ENCODE measurements at regions of chr19 and their contacts with region 1.

Region 1: DNA sequence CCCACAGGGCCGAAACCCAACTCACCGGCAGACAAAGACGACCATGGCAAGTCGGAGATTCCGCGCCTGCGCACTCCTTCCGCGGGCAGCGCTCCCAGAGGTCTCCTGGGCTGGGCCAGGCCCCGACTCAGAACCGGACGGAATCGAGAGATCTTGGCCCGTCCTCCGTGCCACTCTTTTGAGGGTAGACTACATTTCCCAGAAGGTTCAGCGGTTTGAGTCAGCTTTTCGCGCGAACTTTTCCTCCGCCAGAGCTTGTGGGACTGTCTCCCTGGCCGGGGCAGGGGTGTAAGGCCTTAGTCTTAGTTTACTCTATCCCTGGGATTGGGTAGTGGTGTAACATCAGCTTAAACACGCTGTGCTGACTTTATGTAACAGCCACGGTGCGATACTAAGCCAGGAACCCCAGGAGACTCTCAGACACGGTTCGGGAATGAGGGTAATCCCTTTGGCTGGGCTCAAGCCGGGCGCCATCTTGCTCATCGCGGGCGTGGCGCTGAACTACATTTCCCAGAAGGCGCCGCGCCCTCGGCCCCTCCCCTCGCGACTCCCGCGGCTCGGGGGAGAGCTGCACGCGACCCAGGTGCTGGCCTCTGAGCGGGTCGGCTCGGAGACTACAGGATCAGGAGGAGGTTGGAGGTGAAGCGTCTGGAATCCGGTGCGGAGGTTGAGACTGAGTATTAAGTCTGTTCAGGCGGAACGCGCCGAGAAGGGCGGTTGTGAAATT is at the start of gene ZNF260:
- DNase-seq: peak; percentile 96
- H3K4me3 Mint-ChIP-seq: peak within 1 kb of the TSS; percentile 100
- H3K27ac Mint-ChIP-seq: peak within 1 kb of the TSS; percentile 98
- H3K4me1 Mint-ChIP-seq: peaks cover 16% of the 10 kb centered on the region
- H3K27me3 Mint-ChIP-seq: no peaks in the 10 kb centered on the region
- total RNA-seq, gene ZNF260: 3.7 to 5.4 TPM

Region 2: GRCh38 chr19:36132489-36132891 is 395.9 kb before region 1 on chr19:
- CTCF ChIA-PET with region 1: no interaction called
- intact Hi-C with region 1: loop called (anchors 2 kb)
- DNase-seq: peak; percentile 61
- H3K4me3 Mint-ChIP-seq: no peak overlapping the region
- H3K27ac Mint-ChIP-seq: peak overlapping the region; percentile 18
- H3K4me1 Mint-ChIP-seq: peaks cover 32% of the 10 kb centered on the region
- H3K27me3 Mint-ChIP-seq: no peaks in the 10 kb centered on the region

Region 3: GRCh38 chr19:36418287-36419001 is 109.9 kb before region 1 on chr19 and contains the start of gene ZFP82:
- CTCF ChIA-PET with region 1: no interaction called
- intact Hi-C with region 1: loop called (anchors 2 kb)
- DNase-seq: peak; percentile 81
- H3K4me3 Mint-ChIP-seq: peak within 1 kb of the TSS; percentile 92
- H3K27ac Mint-ChIP-seq: peak within 1 kb of the TSS; percentile 92
- H3K4me1 Mint-ChIP-seq: peaks cover 19% of the 10 kb centered on the region
- H3K27me3 Mint-ChIP-seq: peaks cover 18% of the 10 kb centered on the region
- total RNA-seq, gene ZFP82: 2.4 to 2.6 TPM

Region 4: DNA sequence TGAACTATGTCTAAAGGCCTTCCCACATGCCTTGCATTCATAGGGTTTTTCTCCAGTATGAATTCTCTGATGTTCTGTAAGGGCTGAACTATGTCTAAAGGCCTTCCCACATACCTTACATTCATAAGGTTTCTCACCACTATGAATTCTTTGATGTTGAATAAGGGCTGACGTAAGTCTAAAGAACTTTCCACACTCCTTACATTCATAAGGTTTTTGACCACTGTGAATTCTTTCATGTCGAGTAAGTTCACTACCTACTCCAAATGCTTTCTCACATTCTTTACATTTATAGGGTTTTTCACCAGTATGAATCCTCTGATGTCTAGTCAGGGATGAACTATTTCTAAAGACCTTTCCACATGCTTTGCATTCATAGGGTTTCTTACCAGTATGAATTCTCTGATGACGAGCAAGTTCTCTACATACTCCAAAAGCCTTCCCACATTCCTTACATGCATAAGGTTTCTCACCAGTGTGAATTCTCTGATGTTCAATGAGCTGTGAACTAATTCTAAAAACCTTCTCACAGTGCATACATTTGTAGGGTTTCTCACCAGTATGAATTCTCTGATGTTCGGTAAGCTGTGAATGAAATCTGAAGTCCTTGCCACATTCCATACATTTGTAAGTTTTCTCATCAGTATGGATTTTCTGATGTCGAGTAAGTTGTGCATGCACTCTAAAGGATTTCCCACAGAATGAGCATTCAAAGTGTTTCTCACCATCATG is 18.8 kb after region 1 on chr19:
- CTCF ChIA-PET with region 1: no interaction called
- intact Hi-C with region 1: no loop called
- DNase-seq: no peak
- H3K4me3 Mint-ChIP-seq: no peak overlapping the region
- H3K27ac Mint-ChIP-seq: no peak overlapping the region
- H3K4me1 Mint-ChIP-seq: no peaks in the 10 kb centered on the region
- H3K27me3 Mint-ChIP-seq: no peaks in the 10 kb centered on the region

Region 5: GRCh38 chr19:36605101-36605876 is 76.9 kb after region 1 on chr19 and contains the start of gene ZNF382:
- CTCF ChIA-PET with region 1: interaction called, 4 read pairs
- intact Hi-C with region 1: loop called (anchors 1 kb)
- DNase-seq: peak; percentile 87
- H3K4me3 Mint-ChIP-seq: peak within 1 kb of the TSS; percentile 81
- H3K27ac Mint-ChIP-seq: peak within 1 kb of the TSS; percentile 93
- H3K4me1 Mint-ChIP-seq: peaks cover 19% of the 10 kb centered on the region
- H3K27me3 Mint-ChIP-seq: no peaks in the 10 kb centered on the region
- total RNA-seq, gene ZNF382: 7.5 to 7.6 TPM

Region 6: GRCh38 chr19:36772311-36773222 is 244.2 kb after region 1 on chr19 and contains the start of gene ZNF850:
- CTCF ChIA-PET with region 1: no interaction called
- intact Hi-C with region 1: loop called (anchors 2 kb)
- DNase-seq: peak; percentile 97
- H3K4me3 Mint-ChIP-seq: peak within 1 kb of the TSS; percentile 98
- H3K27ac Mint-ChIP-seq: peak within 1 kb of the TSS; percentile 90
- H3K4me1 Mint-ChIP-seq: peaks cover 21% of the 10 kb centered on the region
- H3K27me3 Mint-ChIP-seq: peaks cover 2% of the 10 kb centered on the region
- total RNA-seq, gene ZNF850: 11.2 to 11.3 TPM

Region 7: DNA sequence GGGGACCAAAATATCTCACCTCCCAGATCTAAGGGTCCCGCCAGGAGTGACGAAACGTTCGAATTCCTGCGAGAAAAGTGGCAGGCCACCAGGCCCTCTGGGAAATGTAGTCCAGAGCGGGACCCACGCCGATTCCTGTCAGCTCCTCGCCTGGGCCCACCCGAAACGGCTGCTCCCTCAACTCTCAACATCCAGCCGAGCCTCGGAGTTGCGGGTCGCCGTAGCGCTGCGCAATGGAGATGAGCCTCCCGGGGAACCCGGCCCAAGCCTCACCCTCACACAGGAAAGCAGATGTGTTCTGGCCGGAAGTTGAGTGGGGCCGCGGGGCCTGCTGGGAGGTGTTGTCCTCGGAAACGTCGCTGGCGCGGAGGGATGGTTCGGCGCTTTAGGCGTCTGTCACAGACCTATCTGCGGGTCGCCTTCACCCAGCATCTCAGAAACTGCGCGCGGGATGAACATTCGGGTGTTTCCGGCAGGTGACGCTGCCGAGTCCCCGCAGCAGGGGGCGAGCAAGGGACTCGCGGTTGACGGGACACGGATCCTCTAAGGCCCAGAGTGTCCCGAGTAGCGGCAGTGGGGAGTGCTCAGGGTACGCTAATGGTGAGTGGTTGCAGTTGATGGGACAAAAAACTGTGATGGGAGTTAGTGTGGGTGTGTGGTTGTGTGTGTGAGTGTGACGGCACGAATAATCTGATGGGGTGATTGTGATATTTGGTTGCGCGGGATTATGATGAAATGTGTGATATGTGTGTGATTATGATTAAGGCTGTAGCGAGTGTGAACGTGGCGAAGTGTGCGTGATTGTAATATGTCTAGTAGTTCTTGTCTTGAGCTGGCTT is 387.9 kb after region 1 on chr19 and contains the starts of genes ZNF568 and ZNF829:
- CTCF ChIA-PET with region 1: no interaction called
- intact Hi-C with region 1: loop called (anchors 1 kb)
- DNase-seq: peak; percentile 96
- H3K4me3 Mint-ChIP-seq: peak within 1 kb of the TSS; percentile 87
- H3K27ac Mint-ChIP-seq: peak within 1 kb of the TSS; percentile 91
- H3K4me1 Mint-ChIP-seq: peaks cover 17% of the 10 kb centered on the region
- H3K27me3 Mint-ChIP-seq: no peaks in the 10 kb centered on the region
- total RNA-seq, gene ZNF568: 5.3 to 6.3 TPM
- total RNA-seq, gene ZNF829: 3.5 to 3.7 TPM

Measured in activated naive CD4-positive, alpha-beta T cell treated with anti-CD3 and anti-CD28 coated beads for 36 hours (primary cell).